Aorta (tissue), 5 donors: ENCODE measurements at regions of chr5 and their contacts with region 1.

Region 1: GRCh38 chr5:131825404-131826013 is 28.7 kb upstream of the FNIP1 start:
- DNase-seq: no peak
- ATAC-seq: no peak
- H3K4me3 ChIP-seq: no peak overlapping the region
- H3K27ac ChIP-seq: no peak overlapping the region
- H3K4me1 ChIP-seq: no peaks in the 10 kb centered on the region
- H3K27me3 ChIP-seq: no peaks in the 10 kb centered on the region

Region 2: GRCh38 chr5:130871346-130872086 is 954.0 kb before region 1 on chr5:
- intact Hi-C with region 1: no loop called
- DNase-seq: no peak
- ATAC-seq: peak; percentile 50
- H3K4me3 ChIP-seq: no peak overlapping the region
- H3K27ac ChIP-seq: no peak overlapping the region
- H3K4me1 ChIP-seq: no peaks in the 10 kb centered on the region
- H3K27me3 ChIP-seq: no peaks in the 10 kb centered on the region

Region 3: GRCh38 chr5:131536211-131536826 is 289.2 kb before region 1 on chr5:
- intact Hi-C with region 1: no loop called
- DNase-seq: no peak
- ATAC-seq: no peak
- H3K4me3 ChIP-seq: no peak overlapping the region
- H3K27ac ChIP-seq: no peak overlapping the region
- H3K4me1 ChIP-seq: no peaks in the 10 kb centered on the region
- H3K27me3 ChIP-seq: no peaks in the 10 kb centered on the region

Region 4: GRCh38 chr5:131999441-132000240 is 174.1 kb after region 1 on chr5:
- intact Hi-C with region 1: loop called in 1 of 2 experiments (anchors 10 kb)
- DNase-seq: peak; percentile 34 to 58
- ATAC-seq: no peak
- H3K4me3 ChIP-seq: no peak overlapping the region
- H3K27ac ChIP-seq: no peak overlapping the region
- H3K4me1 ChIP-seq: no peaks in the 10 kb centered on the region
- H3K27me3 ChIP-seq: no peaks in the 10 kb centered on the region